Upper lobe of right lung (tissue), 1 donor: ENCODE measurements at regions of chr20 and their contacts with region 1.

Region 1: GRCh38 chr20:47379433-47380150 is 23.1 kb upstream of the ZMYND8 start:
- DNase-seq: no peak
- ATAC-seq: no peak
- H3K4me3 ChIP-seq: no peak overlapping the region
- H3K27ac ChIP-seq: no peak overlapping the region
- H3K4me1 ChIP-seq: peaks cover 10% of the 10 kb centered on the region
- H3K27me3 ChIP-seq: no peaks in the 10 kb centered on the region
- CTCF ChIP-seq: no peak

Region 2: DNA sequence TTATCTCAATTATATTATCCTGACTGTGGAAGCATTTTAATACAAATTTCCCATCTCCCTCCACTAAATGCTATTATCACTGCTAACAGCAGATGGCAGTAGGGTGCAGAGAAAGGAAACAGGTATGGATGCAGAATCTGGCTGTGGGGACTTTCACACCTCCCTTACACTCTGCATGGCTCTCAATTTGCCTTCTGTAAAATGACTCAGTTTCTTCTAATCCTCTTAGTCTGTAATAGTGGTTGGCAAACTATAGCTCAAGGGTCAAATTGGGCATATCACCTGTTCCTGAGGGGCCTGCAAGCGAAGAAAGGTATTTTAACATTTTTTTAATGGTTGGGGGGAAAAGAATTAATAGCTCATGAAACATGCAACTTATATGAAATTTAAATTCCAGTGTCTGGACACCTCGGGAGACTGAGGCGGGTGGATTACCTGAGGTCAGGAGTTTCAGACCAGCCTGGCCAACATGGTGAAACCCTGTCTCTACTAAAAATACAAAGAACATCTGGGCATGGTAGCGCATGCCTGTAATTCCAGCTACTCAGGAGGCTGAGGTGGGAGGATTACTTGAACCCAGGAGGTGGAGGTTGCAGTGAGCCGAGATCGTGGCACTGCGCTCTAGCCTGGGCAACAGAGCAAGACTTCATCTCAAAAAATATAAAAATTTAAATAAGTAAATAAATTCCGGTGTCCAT is 106.5 kb before region 1 on chr20:
- intact Hi-C with region 1: loop called (anchors 5 kb)
- DNase-seq: no peak
- ATAC-seq: peak; percentile 92
- H3K4me3 ChIP-seq: no peak overlapping the region
- H3K27ac ChIP-seq: peak overlapping the region; percentile 73
- H3K4me1 ChIP-seq: peaks cover 28% of the 10 kb centered on the region
- H3K27me3 ChIP-seq: no peaks in the 10 kb centered on the region
- CTCF ChIP-seq: peak; percentile 90